HepG2 (cell line): ENCODE measurements at regions of chr17 and their contacts with region 1.

Region 1: DNA sequence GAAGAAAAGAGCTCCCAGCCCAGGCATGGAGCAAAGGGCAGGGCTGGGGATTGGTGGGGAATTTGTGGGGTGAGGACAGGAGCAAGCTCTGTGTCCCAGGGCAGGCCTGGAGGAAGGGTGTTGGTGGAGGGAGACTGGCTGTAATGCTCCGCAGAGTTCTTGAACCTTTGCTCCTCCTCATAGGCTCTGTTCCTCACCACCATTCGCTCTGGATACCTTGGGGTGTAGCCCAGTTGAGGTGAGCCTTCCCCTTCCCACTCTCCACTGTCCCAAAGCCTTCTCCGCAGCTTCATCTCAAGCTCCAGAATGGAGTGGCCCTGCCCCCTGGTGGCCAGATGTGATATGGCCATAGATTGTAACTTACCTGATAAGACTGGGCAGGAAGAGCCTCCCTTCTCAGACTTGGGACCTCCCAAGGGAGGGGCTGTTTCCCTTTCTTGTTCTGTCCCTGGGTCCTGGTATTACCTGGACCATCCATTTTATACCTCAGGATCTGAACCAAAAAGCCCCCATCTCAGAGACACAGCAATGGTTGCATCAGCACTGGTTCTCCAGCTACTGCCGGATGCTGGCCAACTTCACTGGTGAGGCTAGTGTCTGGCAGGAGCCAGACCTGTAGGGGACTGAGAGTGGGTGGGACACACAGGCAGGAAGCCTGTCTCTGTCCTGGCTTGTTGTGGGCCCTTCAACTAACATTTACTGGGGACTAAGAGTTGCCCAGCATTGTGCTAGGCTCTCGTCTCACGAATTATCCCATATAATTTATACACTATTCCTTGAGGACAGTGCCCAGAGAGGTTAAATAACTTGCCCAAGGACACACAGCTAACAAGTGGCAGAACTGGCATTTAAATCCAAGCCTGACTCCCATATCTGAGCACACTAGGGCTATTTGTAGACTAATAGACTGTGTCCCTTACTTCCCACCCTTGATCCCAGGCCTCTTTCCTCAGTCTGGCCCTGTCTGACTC is 19.1 kb upstream of the STAC2 start:
- DNase-seq: peak; percentile 85
- ATAC-seq: peak; percentile 90
- H3K4me3 ChIP-seq: peak overlapping the region; percentile 4 to 59 (median 5); a peak in 2 of 6 replicates
- H3K27ac ChIP-seq: no peak overlapping the region
- H3K4me1 ChIP-seq: peaks cover 11% of the 10 kb centered on the region
- H3K27me3 ChIP-seq: peaks cover 0 to 5% of the 10 kb centered on the region in 2 experiments; a peak in 1 of 5 replicates
- CTCF ChIP-seq: peak; percentile 98
- EP300 ChIP-seq: no peak
- POLR2A ChIP-seq: no peak
- RAD21 ChIP-seq: peak; percentile 75

Region 2: GRCh38 chr17:39194089-39194984 is 50.5 kb before region 1 on chr17:
- CTCF ChIA-PET with region 1: interaction called, 6 read pairs
- POLR2A ChIA-PET with region 1: interaction called, 24 read pairs
- in situ Hi-C with region 1: no loop called
- intact Hi-C with region 1: loop called (anchors 5 kb)
- DNase-seq: peak; percentile 80
- ATAC-seq: peak; percentile 89
- H3K4me3 ChIP-seq: peak overlapping the region in 1 of 3 experiments; percentile 34; a peak in 1 of 6 replicates
- H3K27ac ChIP-seq: no peak overlapping the region
- H3K4me1 ChIP-seq: peaks cover 40% of the 10 kb centered on the region
- H3K27me3 ChIP-seq: no peaks in the 10 kb centered on the region
- CTCF ChIP-seq: peak; percentile 69
- EP300 ChIP-seq: no peak
- POLR2A ChIP-seq: no peak
- RAD21 ChIP-seq: peak; percentile 69

Region 3: DNA sequence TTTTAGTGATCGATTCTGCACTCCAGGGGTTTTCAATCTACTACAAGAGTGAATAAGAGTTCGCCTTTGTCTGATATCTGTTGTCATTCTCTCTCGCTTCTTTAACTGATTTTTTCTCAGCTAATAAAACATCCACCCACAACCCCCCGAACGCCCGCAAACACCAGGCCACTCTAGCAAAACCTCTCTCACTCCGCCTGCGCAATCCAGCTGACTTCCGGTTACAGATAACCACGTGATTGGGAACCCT is 45.1 kb before region 1 on chr17:
- CTCF ChIA-PET with region 1: interaction called, 6 read pairs
- POLR2A ChIA-PET with region 1: interaction called, 24 read pairs
- in situ Hi-C with region 1: no loop called
- intact Hi-C with region 1: loop called (anchors 5 kb)
- DNase-seq: peak; percentile 96
- ATAC-seq: peak; percentile 61
- H3K4me3 ChIP-seq: peak overlapping the region; percentile 65 to 92 (median 77)
- H3K27ac ChIP-seq: peak overlapping the region; percentile 97
- H3K4me1 ChIP-seq: peaks cover 59% of the 10 kb centered on the region
- H3K27me3 ChIP-seq: no peaks in the 10 kb centered on the region; a peak in 1 of 5 replicates
- CTCF ChIP-seq: no peak
- EP300 ChIP-seq: no peak
- POLR2A ChIP-seq: no peak; a peak in 2 of 4 replicates
- RAD21 ChIP-seq: no peak

Region 4: GRCh38 chr17:39209317-39210092 is 35.4 kb before region 1 on chr17:
- CTCF ChIA-PET with region 1: interaction called, 35 read pairs
- POLR2A ChIA-PET with region 1: interaction called, 24 read pairs
- in situ Hi-C with region 1: no loop called
- intact Hi-C with region 1: loop called (anchors 1 kb)
- DNase-seq: no peak
- ATAC-seq: no peak
- H3K4me3 ChIP-seq: no peak overlapping the region
- H3K27ac ChIP-seq: no peak overlapping the region
- H3K4me1 ChIP-seq: no peaks in the 10 kb centered on the region
- H3K27me3 ChIP-seq: peaks cover 13 to 58% of the 10 kb centered on the region in 2 experiments; a peak in 4 of 5 replicates
- CTCF ChIP-seq: no peak
- EP300 ChIP-seq: no peak
- POLR2A ChIP-seq: no peak
- RAD21 ChIP-seq: no peak